ENCODE measurements at regions of chr3 and their contacts with region 1.

Region 1: GRCh38 chr3:108271626-108272025 is 24.7 kb upstream of the HHLA2 start:
- DNase-seq: peak in 1 of 2 experiments; percentile 28
- H3K4me3 ChIP-seq: no peak overlapping the region
- H3K27ac ChIP-seq: no peak overlapping the region
- H3K4me1 ChIP-seq: no peaks in the 10 kb centered on the region
- H3K27me3 ChIP-seq: no peaks in the 10 kb centered on the region
- CTCF ChIP-seq: no peak

Region 2: DNA sequence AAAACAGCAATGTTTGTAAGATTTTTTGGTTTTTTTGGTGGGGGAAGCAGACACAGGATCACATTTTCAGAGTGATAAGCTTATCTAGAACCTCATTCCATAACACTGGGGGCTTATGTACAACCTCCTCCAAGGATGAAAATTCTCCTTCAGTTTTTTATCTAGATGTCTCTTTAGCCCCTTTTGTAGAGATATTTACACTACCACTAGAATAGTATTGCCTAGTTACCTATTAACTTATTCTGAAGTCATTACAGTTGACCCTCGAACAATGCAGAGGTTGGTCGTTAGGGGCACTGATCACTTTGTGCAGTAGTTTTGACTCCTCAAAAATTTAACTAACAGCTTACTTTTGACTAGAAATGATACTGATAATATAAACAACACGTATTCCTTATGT is 82.2 kb before region 1 on chr3:
- CTCF ChIA-PET with region 1: no interaction called
- POLR2A ChIA-PET with region 1: interaction called, 18 read pairs
- intact Hi-C with region 1: no loop called
- DNase-seq: no peak
- H3K4me3 ChIP-seq: no peak overlapping the region
- H3K27ac ChIP-seq: no peak overlapping the region
- H3K4me1 ChIP-seq: no peaks in the 10 kb centered on the region
- H3K27me3 ChIP-seq: no peaks in the 10 kb centered on the region
- CTCF ChIP-seq: no peak

Region 3: DNA sequence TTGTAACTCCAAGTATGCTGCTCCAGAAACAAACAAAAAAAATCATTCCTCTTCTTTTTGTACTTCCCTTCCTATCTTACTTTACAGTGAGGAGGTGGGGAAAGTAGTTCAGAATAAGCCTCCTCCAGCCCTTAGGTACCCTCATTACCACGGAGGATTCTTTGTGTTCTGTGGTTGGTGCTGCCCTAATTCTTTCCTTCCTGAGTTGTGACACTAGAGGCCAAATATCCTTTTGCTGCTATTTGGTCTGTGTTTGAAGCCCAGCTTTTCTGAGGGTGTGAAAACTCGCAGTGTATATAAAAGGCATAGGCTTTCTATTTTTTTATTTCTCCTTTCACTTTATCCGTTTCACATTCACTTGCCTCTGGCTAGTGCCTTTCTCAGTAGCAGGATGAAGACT is 122.9 kb after region 1 on chr3:
- CTCF ChIA-PET with region 1: no interaction called
- POLR2A ChIA-PET with region 1: no interaction called
- intact Hi-C with region 1: no loop called
- DNase-seq: no peak
- H3K4me3 ChIP-seq: no peak overlapping the region
- H3K27ac ChIP-seq: no peak overlapping the region
- H3K4me1 ChIP-seq: no peaks in the 10 kb centered on the region
- H3K27me3 ChIP-seq: no peaks in the 10 kb centered on the region
- CTCF ChIP-seq: no peak

Region 4: DNA sequence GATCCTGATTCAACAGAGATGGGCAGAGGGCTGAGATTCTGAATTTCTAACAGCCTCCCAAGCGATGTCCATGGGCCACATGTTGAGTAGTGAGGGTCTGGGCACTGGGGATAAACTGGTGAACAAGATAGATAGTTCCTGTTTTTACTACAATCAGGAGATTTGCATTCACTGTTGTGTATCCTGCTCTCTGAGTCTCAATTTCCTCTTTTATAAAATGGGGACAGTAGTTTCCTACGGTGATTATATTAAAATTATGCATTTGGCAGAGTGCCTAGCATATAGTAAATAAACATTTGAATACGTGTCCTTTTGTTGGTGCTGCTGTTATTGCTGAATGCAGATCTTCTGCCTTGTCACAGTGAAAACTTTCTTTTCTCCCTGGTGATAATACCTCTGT is 136.3 kb after region 1 on chr3:
- CTCF ChIA-PET with region 1: no interaction called
- POLR2A ChIA-PET with region 1: no interaction called
- intact Hi-C with region 1: no loop called
- DNase-seq: no peak
- H3K4me3 ChIP-seq: no peak overlapping the region
- H3K27ac ChIP-seq: no peak overlapping the region
- H3K4me1 ChIP-seq: peaks cover 19% of the 10 kb centered on the region
- H3K27me3 ChIP-seq: no peaks in the 10 kb centered on the region
- CTCF ChIP-seq: no peak